ENCODE measurements at regions of chr11 and their contacts with region 1.

Region 1: GRCh38 chr11:119373921-119374631 is 7.4 kb downstream of the USP2 start:
- DNase-seq: peak; percentile 89 to 95
- H3K4me3 ChIP-seq: no peak overlapping the region
- H3K4me3 Mint-ChIP-seq: no peak overlapping the region
- H3K27ac Mint-ChIP-seq: no peak overlapping the region
- H3K4me1 ChIP-seq: peaks cover 32% of the 10 kb centered on the region
- H3K4me1 Mint-ChIP-seq: peaks cover 28% of the 10 kb centered on the region
- H3K27me3 ChIP-seq: no peaks in the 10 kb centered on the region
- H3K27me3 Mint-ChIP-seq: no peaks in the 10 kb centered on the region
- CTCF ChIP-seq: peak; percentile 98 to 99

Region 2: GRCh38 chr11:117554601-117555333 is 1819.3 kb before region 1 on chr11:
- CTCF ChIA-PET with region 1: no interaction called
- POLR2A ChIA-PET with region 1: no interaction called
- intact Hi-C with region 1: no loop called
- DNase-seq: peak in 1 of 2 experiments; percentile 21
- H3K4me3 ChIP-seq: no peak overlapping the region
- H3K4me3 Mint-ChIP-seq: no peak overlapping the region
- H3K27ac Mint-ChIP-seq: no peak overlapping the region
- H3K4me1 ChIP-seq: no peaks in the 10 kb centered on the region
- H3K4me1 Mint-ChIP-seq: no peaks in the 10 kb centered on the region
- H3K27me3 ChIP-seq: peaks cover 2% of the 10 kb centered on the region
- H3K27me3 Mint-ChIP-seq: peaks cover 35% of the 10 kb centered on the region
- CTCF ChIP-seq: no peak

Region 3: GRCh38 chr11:119144825-119145486 is 229.1 kb before region 1 on chr11:
- CTCF ChIA-PET with region 1: interaction called, 3 read pairs
- POLR2A ChIA-PET with region 1: no interaction called
- intact Hi-C with region 1: loop called (anchors 2 kb)
- DNase-seq: peak; percentile 87 to 93
- H3K4me3 ChIP-seq: no peak overlapping the region
- H3K4me3 Mint-ChIP-seq: no peak overlapping the region
- H3K27ac Mint-ChIP-seq: no peak overlapping the region
- H3K4me1 ChIP-seq: peaks cover 5% of the 10 kb centered on the region; the same call in 1 of the 2 replicates
- H3K4me1 Mint-ChIP-seq: no peaks in the 10 kb centered on the region
- H3K27me3 ChIP-seq: no peaks in the 10 kb centered on the region; the same call in 1 of the 2 replicates
- H3K27me3 Mint-ChIP-seq: peaks cover 10% of the 10 kb centered on the region
- CTCF ChIP-seq: peak; percentile 92 to 95

Region 4: DNA sequence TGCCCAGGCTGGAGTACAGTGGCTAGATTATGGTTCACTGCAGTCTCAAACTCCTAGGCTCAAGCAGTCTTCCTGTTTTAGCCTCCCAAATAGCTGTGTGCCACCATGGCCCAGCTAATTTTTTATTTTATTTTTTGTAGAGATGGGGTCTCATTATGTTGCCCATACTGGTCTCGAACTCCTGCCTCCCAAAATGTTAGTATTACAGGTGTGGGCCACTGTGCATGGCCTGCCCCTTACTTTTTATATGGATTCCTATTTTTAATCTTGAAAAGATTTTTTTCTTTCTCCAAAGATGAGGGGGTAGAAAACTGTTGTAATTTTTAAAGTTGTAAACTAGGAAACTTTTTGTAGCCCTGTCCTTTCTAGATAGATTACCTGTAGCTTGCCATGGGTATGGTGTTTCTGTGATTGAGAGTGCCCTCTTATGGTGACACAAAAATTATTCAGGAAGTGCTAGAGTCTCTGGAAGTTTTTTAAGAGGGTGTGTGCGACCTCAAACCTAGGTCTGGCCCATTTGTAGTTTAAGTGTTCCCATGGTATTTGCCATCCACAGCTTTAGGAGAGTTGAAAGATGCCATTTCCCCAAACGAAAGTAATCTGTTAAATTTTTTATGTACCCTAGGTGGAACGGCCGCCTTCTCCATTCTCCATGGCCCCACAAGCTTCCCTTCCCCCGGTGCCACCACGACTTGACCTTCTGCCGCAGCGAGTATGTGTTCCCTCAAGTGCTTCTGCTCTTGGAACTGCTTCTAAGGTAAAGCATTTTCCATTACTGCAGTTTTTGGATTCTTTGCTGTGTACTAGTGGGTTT is 89.5 kb before region 1 on chr11:
- CTCF ChIA-PET with region 1: interaction called, 4 read pairs
- POLR2A ChIA-PET with region 1: no interaction called
- intact Hi-C with region 1: loop called (anchors 1 kb)
- DNase-seq: peak in 1 of 2 experiments; percentile 63
- H3K4me3 ChIP-seq: no peak overlapping the region
- H3K4me3 Mint-ChIP-seq: no peak overlapping the region
- H3K27ac Mint-ChIP-seq: no peak overlapping the region
- H3K4me1 ChIP-seq: no peaks in the 10 kb centered on the region
- H3K4me1 Mint-ChIP-seq: no peaks in the 10 kb centered on the region
- H3K27me3 ChIP-seq: no peaks in the 10 kb centered on the region
- H3K27me3 Mint-ChIP-seq: no peaks in the 10 kb centered on the region
- CTCF ChIP-seq: peak; percentile 71 to 74

Region 5: GRCh38 chr11:119295178-119295577 is 78.9 kb before region 1 on chr11:
- CTCF ChIA-PET with region 1: no interaction called
- POLR2A ChIA-PET with region 1: no interaction called
- intact Hi-C with region 1: no loop called
- DNase-seq: no peak
- H3K4me3 ChIP-seq: no peak overlapping the region
- H3K4me3 Mint-ChIP-seq: no peak overlapping the region
- H3K27ac Mint-ChIP-seq: no peak overlapping the region
- H3K4me1 ChIP-seq: no peaks in the 10 kb centered on the region
- H3K4me1 Mint-ChIP-seq: no peaks in the 10 kb centered on the region
- H3K27me3 ChIP-seq: no peaks in the 10 kb centered on the region
- H3K27me3 Mint-ChIP-seq: no peaks in the 10 kb centered on the region
- CTCF ChIP-seq: no peak

Region 6: DNA sequence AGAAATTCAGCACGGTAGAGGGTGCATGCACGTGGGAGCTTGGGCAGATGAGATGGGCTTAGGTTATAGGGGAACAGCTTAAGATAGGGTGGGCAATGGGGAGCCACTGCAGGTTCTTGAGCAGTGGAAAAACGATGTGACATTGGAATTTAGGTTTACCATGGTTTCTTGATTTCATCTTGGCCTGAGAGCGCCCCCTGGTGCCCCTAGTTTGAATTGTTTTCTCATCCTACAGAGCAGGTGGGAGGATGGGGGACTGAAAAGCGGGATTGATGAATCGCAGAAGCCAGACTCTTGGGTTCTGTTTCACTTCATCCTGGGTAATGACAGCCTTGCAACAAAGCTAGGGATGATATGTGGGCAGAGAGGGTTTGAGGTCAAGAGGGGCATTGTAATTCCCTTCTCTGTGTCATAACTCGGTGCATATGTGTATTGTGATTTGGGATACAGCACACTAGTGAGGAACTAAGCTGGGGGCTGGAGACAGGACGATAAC is 50.5 kb before region 1 on chr11:
- CTCF ChIA-PET with region 1: interaction called, 30 read pairs
- POLR2A ChIA-PET with region 1: no interaction called
- intact Hi-C with region 1: loop called (anchors 1 kb)
- DNase-seq: peak; percentile 82 to 89
- H3K4me3 ChIP-seq: no peak overlapping the region
- H3K4me3 Mint-ChIP-seq: no peak overlapping the region
- H3K27ac Mint-ChIP-seq: no peak overlapping the region
- H3K4me1 ChIP-seq: peaks cover 24% of the 10 kb centered on the region
- H3K4me1 Mint-ChIP-seq: no peaks in the 10 kb centered on the region
- H3K27me3 ChIP-seq: no peaks in the 10 kb centered on the region
- H3K27me3 Mint-ChIP-seq: no peaks in the 10 kb centered on the region
- CTCF ChIP-seq: peak; percentile 84 to 95

Region 7: GRCh38 chr11:119352857-119353260 is 21.2 kb before region 1 on chr11:
- CTCF ChIA-PET with region 1: interaction called, 5 read pairs
- POLR2A ChIA-PET with region 1: interaction called, 3 read pairs
- intact Hi-C with region 1: loop called (anchors 1 kb)
- DNase-seq: peak in 1 of 2 experiments; percentile 47
- H3K4me3 ChIP-seq: no peak overlapping the region
- H3K4me3 Mint-ChIP-seq: no peak overlapping the region
- H3K27ac Mint-ChIP-seq: no peak overlapping the region
- H3K4me1 ChIP-seq: peaks cover 7% of the 10 kb centered on the region; the same call in 1 of the 2 replicates
- H3K4me1 Mint-ChIP-seq: peaks cover 8% of the 10 kb centered on the region
- H3K27me3 ChIP-seq: no peaks in the 10 kb centered on the region
- H3K27me3 Mint-ChIP-seq: peaks cover 3% of the 10 kb centered on the region
- CTCF ChIP-seq: no peak

Region 8: GRCh38 chr11:119363851-119364590 is 10.1 kb before region 1 on chr11:
- CTCF ChIA-PET with region 1: interaction called, 37 read pairs
- POLR2A ChIA-PET with region 1: interaction called, 3 read pairs
- intact Hi-C with region 1: no loop called
- DNase-seq: peak in 1 of 2 experiments; percentile 92
- H3K4me3 ChIP-seq: peak overlapping the region; percentile 64
- H3K4me3 Mint-ChIP-seq: peak overlapping the region; percentile 77
- H3K27ac Mint-ChIP-seq: peak overlapping the region; percentile 67
- H3K4me1 ChIP-seq: peaks cover 75% of the 10 kb centered on the region
- H3K4me1 Mint-ChIP-seq: peaks cover 68% of the 10 kb centered on the region
- H3K27me3 ChIP-seq: no peaks in the 10 kb centered on the region
- H3K27me3 Mint-ChIP-seq: no peaks in the 10 kb centered on the region
- CTCF ChIP-seq: no peak

Region 9: DNA sequence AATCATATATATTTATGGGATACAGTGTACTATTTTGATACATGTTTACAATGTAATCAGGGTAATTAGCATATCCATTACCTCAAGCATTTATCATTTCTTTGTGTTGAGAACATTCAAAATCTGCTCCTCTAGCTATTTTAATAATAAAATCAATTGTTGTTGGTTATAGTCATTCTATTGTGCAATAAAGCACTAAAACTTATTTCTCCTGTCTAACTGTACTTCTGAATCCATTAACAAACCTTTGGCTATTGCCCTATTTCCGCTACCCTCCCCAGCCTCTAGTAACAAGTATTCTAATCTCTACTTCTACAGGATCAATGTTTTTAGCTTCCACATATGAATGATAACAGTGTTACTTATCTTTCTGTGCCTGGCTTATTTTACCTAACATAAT is 22.8 kb after region 1 on chr11:
- CTCF ChIA-PET with region 1: no interaction called
- POLR2A ChIA-PET with region 1: no interaction called
- intact Hi-C with region 1: no loop called
- DNase-seq: no peak
- H3K4me3 ChIP-seq: no peak overlapping the region
- H3K4me3 Mint-ChIP-seq: no peak overlapping the region
- H3K27ac Mint-ChIP-seq: no peak overlapping the region
- H3K4me1 ChIP-seq: no peaks in the 10 kb centered on the region
- H3K4me1 Mint-ChIP-seq: no peaks in the 10 kb centered on the region
- H3K27me3 ChIP-seq: 0 out of 2 replicates have a peak, but pooled peaks cover 1% of the 10 kb centered on the region
- H3K27me3 Mint-ChIP-seq: no peaks in the 10 kb centered on the region
- CTCF ChIP-seq: no peak

Region 10: DNA sequence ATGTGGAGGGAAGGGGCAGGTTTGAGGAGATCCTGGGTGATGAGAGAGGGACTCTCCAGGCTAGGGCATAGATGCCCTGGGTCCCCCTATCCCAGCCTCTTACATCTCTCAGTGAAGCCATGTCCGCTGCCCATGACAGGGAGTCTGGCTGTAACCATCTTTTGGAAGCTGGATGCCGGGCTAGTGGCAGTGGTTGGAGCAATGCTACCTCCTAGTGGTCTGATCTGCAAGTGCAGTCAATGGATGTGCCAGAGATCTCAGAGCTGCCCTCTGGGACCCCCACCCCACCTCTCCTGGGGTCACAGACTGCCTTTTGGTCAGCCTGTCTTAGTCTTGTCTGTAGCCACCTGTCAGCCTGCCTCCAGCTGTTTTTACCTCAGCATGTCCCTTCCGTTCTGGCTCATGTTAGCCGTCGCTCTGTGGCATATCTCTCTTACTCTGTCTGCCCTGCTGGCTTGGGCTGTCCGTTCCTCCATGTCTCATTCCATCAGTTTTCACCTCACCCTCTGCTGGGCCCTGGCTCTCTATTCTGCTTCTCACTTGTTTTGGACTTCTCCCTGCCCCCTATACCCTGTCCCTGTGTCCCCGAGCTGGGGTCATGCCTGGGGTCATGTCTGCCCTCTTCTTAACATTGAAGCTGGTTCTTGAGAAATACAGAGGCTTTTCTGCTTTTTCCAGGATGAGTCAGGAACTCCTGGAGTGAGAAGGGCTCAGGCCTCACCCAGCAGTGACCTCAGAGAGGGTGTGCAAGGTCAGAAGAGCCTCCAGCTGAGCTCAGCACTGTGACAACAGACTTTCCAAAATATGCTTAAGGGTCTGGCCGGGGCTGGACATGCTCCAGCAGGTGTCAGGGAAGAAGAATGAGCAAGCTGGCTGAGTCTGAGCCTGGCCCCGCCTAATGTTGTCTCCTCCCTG is 100.9 kb after region 1 on chr11:
- CTCF ChIA-PET with region 1: interaction called, 11 read pairs
- POLR2A ChIA-PET with region 1: no interaction called
- intact Hi-C with region 1: no loop called
- DNase-seq: peak; percentile 65 to 79
- H3K4me3 ChIP-seq: no peak overlapping the region
- H3K4me3 Mint-ChIP-seq: no peak overlapping the region
- H3K27ac Mint-ChIP-seq: no peak overlapping the region
- H3K4me1 ChIP-seq: no peaks in the 10 kb centered on the region
- H3K4me1 Mint-ChIP-seq: no peaks in the 10 kb centered on the region
- H3K27me3 ChIP-seq: no peaks in the 10 kb centered on the region; the same call in 1 of the 2 replicates
- H3K27me3 Mint-ChIP-seq: peaks cover 11% of the 10 kb centered on the region
- CTCF ChIP-seq: peak; percentile 92 to 97

Region 11: DNA sequence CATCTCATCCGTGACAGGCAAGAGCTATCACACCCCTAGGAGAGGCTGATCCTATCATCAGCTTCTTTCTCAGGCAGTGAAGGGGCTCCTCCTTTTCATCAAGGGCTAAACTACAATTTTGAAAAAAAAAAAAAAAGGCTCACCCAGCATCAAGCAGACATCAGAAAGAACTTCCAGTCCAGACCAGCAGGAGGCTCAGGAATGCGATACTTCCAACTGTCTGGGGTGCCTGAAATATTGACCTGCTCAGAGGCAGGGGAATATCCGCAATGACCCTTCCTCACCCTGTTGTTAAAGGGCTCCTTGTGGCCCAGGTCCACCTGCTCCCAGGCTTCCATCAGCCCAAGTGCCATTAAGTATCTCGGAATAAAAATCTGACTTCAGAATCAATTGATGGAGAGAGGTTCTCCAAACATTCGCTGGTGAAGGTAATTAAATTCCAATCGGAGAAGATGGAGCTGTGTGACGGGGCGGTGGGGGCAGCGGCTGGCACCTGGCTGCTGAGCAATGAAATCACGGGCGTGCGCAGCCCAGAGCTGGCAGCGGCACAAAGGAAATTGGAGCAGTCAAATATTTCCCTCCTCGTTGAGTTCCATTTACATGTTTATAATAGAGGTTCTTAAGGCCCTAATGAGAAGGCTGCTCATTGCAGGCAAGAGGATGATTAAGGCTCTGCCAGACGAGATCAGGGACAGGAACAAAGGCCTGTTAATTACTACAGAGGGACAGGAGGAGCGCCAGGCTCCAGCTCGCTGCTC is 117.9 kb after region 1 on chr11:
- CTCF ChIA-PET with region 1: no interaction called
- POLR2A ChIA-PET with region 1: no interaction called
- intact Hi-C with region 1: no loop called
- DNase-seq: peak in 1 of 2 experiments; percentile 47
- H3K4me3 ChIP-seq: no peak overlapping the region
- H3K4me3 Mint-ChIP-seq: no peak overlapping the region
- H3K27ac Mint-ChIP-seq: no peak overlapping the region
- H3K4me1 ChIP-seq: no peaks in the 10 kb centered on the region
- H3K4me1 Mint-ChIP-seq: no peaks in the 10 kb centered on the region
- H3K27me3 ChIP-seq: 0 out of 2 replicates have a peak, but pooled peaks cover 3% of the 10 kb centered on the region
- H3K27me3 Mint-ChIP-seq: peaks cover 29% of the 10 kb centered on the region
- CTCF ChIP-seq: peak; percentile 48 to 62